Caco-2 (cell line): ENCODE measurements at regions of chr21 and their contacts with region 1.

Region 1: GRCh38 chr21:36330904-36331303 is 10.9 kb downstream of the MORC3 start:
- DNase-seq: peak; percentile 53 to 62
- H3K4me3 ChIP-seq: no peak overlapping the region
- H3K4me3 Mint-ChIP-seq: no peak overlapping the region
- H3K27ac Mint-ChIP-seq: peak overlapping the region; percentile 1
- H3K4me1 ChIP-seq: no peaks in the 10 kb centered on the region
- H3K4me1 Mint-ChIP-seq: peaks cover 12% of the 10 kb centered on the region
- H3K27me3 ChIP-seq: no peaks in the 10 kb centered on the region
- H3K27me3 Mint-ChIP-seq: no peaks in the 10 kb centered on the region
- CTCF ChIP-seq: peak; percentile 77 to 81

Region 2: GRCh38 chr21:35796844-35797243 is 534.1 kb before region 1 on chr21:
- CTCF ChIA-PET with region 1: no interaction called
- POLR2A ChIA-PET with region 1: no interaction called
- intact Hi-C with region 1: no loop called
- DNase-seq: no peak
- H3K4me3 ChIP-seq: no peak overlapping the region
- H3K4me3 Mint-ChIP-seq: no peak overlapping the region
- H3K27ac Mint-ChIP-seq: no peak overlapping the region
- H3K4me1 ChIP-seq: no peaks in the 10 kb centered on the region
- H3K4me1 Mint-ChIP-seq: peaks cover 7% of the 10 kb centered on the region
- H3K27me3 ChIP-seq: no peaks in the 10 kb centered on the region
- H3K27me3 Mint-ChIP-seq: peaks cover 11% of the 10 kb centered on the region
- CTCF ChIP-seq: no peak

Region 3: GRCh38 chr21:36141513-36141925 is 189.4 kb before region 1 on chr21:
- CTCF ChIA-PET with region 1: interaction called, 3 read pairs
- POLR2A ChIA-PET with region 1: no interaction called
- intact Hi-C with region 1: loop called (anchors 1 kb)
- DNase-seq: peak; percentile 95 to 96
- H3K4me3 ChIP-seq: no peak overlapping the region
- H3K4me3 Mint-ChIP-seq: no peak overlapping the region
- H3K27ac Mint-ChIP-seq: no peak overlapping the region
- H3K4me1 ChIP-seq: peaks cover 4% of the 10 kb centered on the region
- H3K4me1 Mint-ChIP-seq: peaks cover 15% of the 10 kb centered on the region
- H3K27me3 ChIP-seq: no peaks in the 10 kb centered on the region
- H3K27me3 Mint-ChIP-seq: no peaks in the 10 kb centered on the region
- CTCF ChIP-seq: peak; percentile 64 to 78

Region 4: GRCh38 chr21:36209626-36210171 is 121.2 kb before region 1 on chr21:
- CTCF ChIA-PET with region 1: no interaction called
- POLR2A ChIA-PET with region 1: no interaction called
- intact Hi-C with region 1: loop called (anchors 1 kb)
- DNase-seq: peak; percentile 74 to 76
- H3K4me3 ChIP-seq: no peak overlapping the region
- H3K4me3 Mint-ChIP-seq: peak overlapping the region; percentile 32
- H3K27ac Mint-ChIP-seq: peak overlapping the region; percentile 81
- H3K4me1 ChIP-seq: peaks cover 16% of the 10 kb centered on the region
- H3K4me1 Mint-ChIP-seq: peaks cover 25% of the 10 kb centered on the region
- H3K27me3 ChIP-seq: no peaks in the 10 kb centered on the region
- H3K27me3 Mint-ChIP-seq: no peaks in the 10 kb centered on the region
- CTCF ChIP-seq: peak; percentile 74 to 79

Region 5: GRCh38 chr21:36235058-36235582 is 95.8 kb before region 1 on chr21:
- CTCF ChIA-PET with region 1: no interaction called
- POLR2A ChIA-PET with region 1: no interaction called
- intact Hi-C with region 1: loop called (anchors 1 kb)
- DNase-seq: peak; percentile 87 to 93
- H3K4me3 ChIP-seq: no peak overlapping the region
- H3K4me3 Mint-ChIP-seq: peak overlapping the region; percentile 35
- H3K27ac Mint-ChIP-seq: peak overlapping the region; percentile 79
- H3K4me1 ChIP-seq: peaks cover 23% of the 10 kb centered on the region
- H3K4me1 Mint-ChIP-seq: peaks cover 23% of the 10 kb centered on the region
- H3K27me3 ChIP-seq: no peaks in the 10 kb centered on the region
- H3K27me3 Mint-ChIP-seq: no peaks in the 10 kb centered on the region
- CTCF ChIP-seq: no peak

Region 6: DNA sequence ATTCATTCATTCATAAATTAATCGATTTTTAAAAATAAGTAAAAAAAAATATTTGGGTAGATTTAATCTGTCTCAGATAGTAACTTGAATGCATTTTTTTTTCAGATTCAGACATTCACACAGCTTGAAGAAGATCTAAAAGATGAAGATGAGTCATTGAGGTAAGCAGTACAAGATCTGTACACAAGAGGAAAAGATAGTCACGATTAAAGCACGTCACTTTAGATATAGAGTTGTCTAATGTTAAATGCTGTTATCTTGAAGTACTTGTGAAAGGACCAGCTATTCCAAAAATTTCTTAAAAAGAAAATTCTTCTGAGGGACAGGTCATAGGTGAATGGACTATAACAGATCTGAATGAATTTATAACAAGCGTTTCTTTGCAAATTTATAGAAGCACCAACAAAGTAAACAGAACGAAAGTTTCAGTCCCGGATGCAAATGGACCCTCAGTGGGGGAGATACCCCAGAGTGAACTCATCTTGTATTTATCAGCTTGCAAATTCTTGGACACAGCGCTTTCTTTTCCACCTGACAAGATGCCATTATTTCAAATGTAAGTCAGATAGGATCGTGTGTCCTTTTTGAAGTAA is 42.2 kb before region 1 on chr21:
- CTCF ChIA-PET with region 1: no interaction called
- POLR2A ChIA-PET with region 1: no interaction called
- intact Hi-C with region 1: loop called (anchors 5 kb)
- DNase-seq: no peak
- H3K4me3 ChIP-seq: no peak overlapping the region
- H3K4me3 Mint-ChIP-seq: no peak overlapping the region
- H3K27ac Mint-ChIP-seq: no peak overlapping the region
- H3K4me1 ChIP-seq: no peaks in the 10 kb centered on the region; the same call in 1 of the 2 replicates
- H3K4me1 Mint-ChIP-seq: peaks cover 15% of the 10 kb centered on the region
- H3K27me3 ChIP-seq: no peaks in the 10 kb centered on the region
- H3K27me3 Mint-ChIP-seq: no peaks in the 10 kb centered on the region
- CTCF ChIP-seq: no peak

Region 7: DNA sequence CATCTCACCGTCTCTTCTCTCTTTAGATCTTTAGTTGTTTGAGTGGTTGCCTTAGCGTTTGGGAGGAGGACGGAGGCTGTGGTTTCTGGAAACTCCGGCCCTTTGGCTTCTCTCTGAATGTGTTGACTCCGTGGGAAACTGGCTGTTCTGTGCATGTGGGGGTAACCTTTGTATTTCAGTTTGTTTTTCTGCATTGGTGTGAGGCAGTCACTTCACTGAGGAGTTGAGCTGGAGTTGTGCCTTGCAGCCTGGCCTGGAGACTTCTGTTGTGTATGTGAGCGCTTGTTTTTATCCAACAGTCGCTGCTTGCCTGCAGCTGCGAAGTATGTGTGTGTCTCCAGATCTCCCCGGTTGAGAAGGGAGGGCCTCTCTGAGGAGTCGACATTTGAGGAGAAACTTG is 115.4 kb after region 1 on chr21:
- CTCF ChIA-PET with region 1: no interaction called
- POLR2A ChIA-PET with region 1: no interaction called
- intact Hi-C with region 1: no loop called
- DNase-seq: no peak
- H3K4me3 ChIP-seq: no peak overlapping the region
- H3K4me3 Mint-ChIP-seq: no peak overlapping the region
- H3K27ac Mint-ChIP-seq: no peak overlapping the region
- H3K4me1 ChIP-seq: no peaks in the 10 kb centered on the region
- H3K4me1 Mint-ChIP-seq: no peaks in the 10 kb centered on the region
- H3K27me3 ChIP-seq: no peaks in the 10 kb centered on the region
- H3K27me3 Mint-ChIP-seq: no peaks in the 10 kb centered on the region
- CTCF ChIP-seq: no peak